ENCODE measurements at regions of chr12 and their contacts with region 1.

Region 1: DNA sequence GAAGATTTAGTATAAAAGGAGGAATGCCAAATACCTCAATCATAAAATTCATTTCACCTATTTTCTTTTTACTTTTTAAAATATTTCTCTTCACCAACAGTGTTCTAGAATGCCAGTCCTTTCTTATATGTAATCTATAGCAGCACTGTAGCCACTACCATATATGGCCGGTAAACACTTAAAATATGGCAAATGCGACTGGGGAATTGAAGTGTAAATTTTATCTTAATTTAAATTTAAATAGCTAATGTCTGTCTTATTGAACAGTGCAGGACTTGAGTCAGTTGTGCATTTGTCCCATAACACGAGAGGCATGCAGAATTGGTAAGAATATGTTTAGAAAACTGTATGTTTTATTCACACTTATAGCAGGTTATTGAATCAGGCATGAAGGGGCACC is 50.1 kb downstream of the WASHC4 start:
- DNase-seq: no peak
- H3K4me3 ChIP-seq: no peak overlapping the region
- H3K4me3 Mint-ChIP-seq: no peak overlapping the region
- H3K27ac Mint-ChIP-seq: no peak overlapping the region
- H3K4me1 ChIP-seq: peaks cover 7% of the 10 kb centered on the region; the same call in 1 of the 2 replicates
- H3K4me1 Mint-ChIP-seq: peaks cover 5% of the 10 kb centered on the region
- H3K27me3 ChIP-seq: no peaks in the 10 kb centered on the region
- H3K27me3 Mint-ChIP-seq: no peaks in the 10 kb centered on the region
- CTCF ChIP-seq: no peak

Region 2: DNA sequence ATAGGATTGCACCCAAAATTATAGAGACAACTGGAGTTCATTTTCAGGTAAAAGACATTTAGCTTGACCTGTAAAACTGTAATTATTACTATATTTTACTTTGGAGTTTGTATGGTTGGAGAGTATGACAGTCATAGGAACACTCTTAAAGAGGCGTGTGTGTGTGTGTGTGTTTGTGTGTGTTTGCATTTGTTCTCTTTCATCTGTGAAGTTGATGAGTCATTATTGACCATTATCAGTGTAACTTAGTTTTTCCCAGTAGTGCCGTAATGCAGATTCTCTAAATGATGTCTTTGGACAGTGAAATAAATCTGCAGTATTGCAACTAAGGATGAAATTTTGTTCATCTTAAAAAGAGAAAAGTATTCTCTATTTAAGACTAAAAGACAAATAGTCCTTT is 37.1 kb before region 1 on chr12:
- CTCF ChIA-PET with region 1: no interaction called
- POLR2A ChIA-PET with region 1: no interaction called
- intact Hi-C with region 1: loop called (anchors 1 kb)
- DNase-seq: no peak
- H3K4me3 ChIP-seq: no peak overlapping the region
- H3K4me3 Mint-ChIP-seq: no peak overlapping the region
- H3K27ac Mint-ChIP-seq: no peak overlapping the region
- H3K4me1 ChIP-seq: no peaks in the 10 kb centered on the region
- H3K4me1 Mint-ChIP-seq: no peaks in the 10 kb centered on the region
- H3K27me3 ChIP-seq: no peaks in the 10 kb centered on the region
- H3K27me3 Mint-ChIP-seq: no peaks in the 10 kb centered on the region
- CTCF ChIP-seq: no peak

Measured in Caco-2 (cell line).